A673 (cell line): ENCODE measurements at regions of chr7 and their contacts with region 1.

Region 1: GRCh38 chr7:379456-380138 is 89.6 kb downstream of the FOXL3 start:
- DNase-seq: no peak
- H3K4me3 ChIP-seq: no peak overlapping the region
- H3K27ac ChIP-seq: no peak overlapping the region
- H3K4me1 ChIP-seq: no peaks in the 10 kb centered on the region
- H3K27me3 ChIP-seq: no peaks in the 10 kb centered on the region
- CTCF ChIP-seq: no peak

Region 2: GRCh38 chr7:311796-312195 is 67.8 kb before region 1 on chr7:
- CTCF ChIA-PET with region 1: no interaction called
- POLR2A ChIA-PET with region 1: no interaction called
- intact Hi-C with region 1: no loop called
- DNase-seq: no peak
- H3K4me3 ChIP-seq: no peak overlapping the region
- H3K27ac ChIP-seq: no peak overlapping the region
- H3K4me1 ChIP-seq: no peaks in the 10 kb centered on the region
- H3K27me3 ChIP-seq: peaks cover 37% of the 10 kb centered on the region
- CTCF ChIP-seq: no peak

Region 3: DNA sequence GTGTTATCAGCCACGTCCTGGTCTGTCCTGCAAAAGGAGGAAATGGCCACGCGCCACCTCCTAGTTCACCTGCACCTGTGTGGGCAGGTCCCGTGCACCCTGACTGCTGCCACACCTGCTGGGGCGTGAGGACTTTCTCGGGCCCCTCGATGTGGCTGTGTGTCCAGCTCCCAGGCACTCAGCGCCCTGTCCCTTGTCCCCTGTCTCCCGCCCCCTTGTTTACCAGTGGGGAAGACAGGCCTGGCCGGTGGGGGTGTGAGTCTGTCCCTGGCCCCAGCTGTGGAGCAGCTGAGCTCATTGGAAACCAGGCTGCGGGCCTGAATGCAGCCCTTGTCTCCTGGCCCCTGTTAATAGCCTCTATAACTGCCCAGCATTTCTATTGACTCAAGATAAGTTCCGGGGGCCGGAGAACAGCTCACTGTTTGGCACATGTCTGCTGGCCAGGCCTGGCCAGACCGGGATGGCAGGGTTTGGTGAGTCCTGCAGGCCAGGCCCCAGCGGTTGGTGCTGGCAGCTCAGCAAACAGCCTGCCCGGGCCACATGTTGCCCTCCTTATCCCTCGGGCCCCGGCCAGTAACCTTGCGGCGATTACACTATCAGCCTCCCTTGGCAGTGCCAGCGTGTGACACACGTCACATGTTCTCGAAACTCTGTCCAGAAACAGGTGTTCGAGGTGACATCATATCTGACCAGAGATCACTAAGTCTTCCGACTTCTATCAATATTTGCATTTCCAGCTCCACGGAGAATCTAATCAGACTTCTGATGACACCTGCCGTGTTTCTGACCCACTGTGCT is 37.6 kb before region 1 on chr7:
- CTCF ChIA-PET with region 1: no interaction called
- POLR2A ChIA-PET with region 1: no interaction called
- intact Hi-C with region 1: no loop called
- DNase-seq: no peak
- H3K4me3 ChIP-seq: no peak overlapping the region
- H3K27ac ChIP-seq: no peak overlapping the region
- H3K4me1 ChIP-seq: no peaks in the 10 kb centered on the region
- H3K27me3 ChIP-seq: no peaks in the 10 kb centered on the region
- CTCF ChIP-seq: no peak

Region 4: DNA sequence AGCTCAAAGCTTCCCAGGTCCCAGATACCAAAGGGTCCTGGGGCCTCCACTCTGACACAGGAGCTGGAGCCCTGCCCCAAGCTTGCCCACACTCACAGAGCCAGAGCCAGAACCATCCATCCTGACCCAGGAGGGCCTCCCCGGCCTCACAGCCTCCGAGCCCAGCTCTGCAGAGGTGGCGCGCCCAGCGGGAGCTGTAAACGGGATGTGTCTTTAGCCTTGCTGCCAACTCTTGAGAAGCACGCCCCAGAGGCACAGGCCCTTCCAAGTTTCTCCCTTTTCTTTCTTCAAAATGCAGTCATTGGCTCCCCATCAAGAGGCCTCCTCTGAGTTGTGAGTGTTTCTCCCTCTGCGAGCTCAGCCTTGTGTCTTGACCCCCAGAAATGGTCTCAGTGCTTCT is 65.0 kb after region 1 on chr7:
- CTCF ChIA-PET with region 1: no interaction called
- POLR2A ChIA-PET with region 1: no interaction called
- intact Hi-C with region 1: loop called (anchors 10 kb)
- DNase-seq: no peak
- H3K4me3 ChIP-seq: no peak overlapping the region
- H3K27ac ChIP-seq: no peak overlapping the region
- H3K4me1 ChIP-seq: no peaks in the 10 kb centered on the region
- H3K27me3 ChIP-seq: no peaks in the 10 kb centered on the region
- CTCF ChIP-seq: no peak

Region 5: DNA sequence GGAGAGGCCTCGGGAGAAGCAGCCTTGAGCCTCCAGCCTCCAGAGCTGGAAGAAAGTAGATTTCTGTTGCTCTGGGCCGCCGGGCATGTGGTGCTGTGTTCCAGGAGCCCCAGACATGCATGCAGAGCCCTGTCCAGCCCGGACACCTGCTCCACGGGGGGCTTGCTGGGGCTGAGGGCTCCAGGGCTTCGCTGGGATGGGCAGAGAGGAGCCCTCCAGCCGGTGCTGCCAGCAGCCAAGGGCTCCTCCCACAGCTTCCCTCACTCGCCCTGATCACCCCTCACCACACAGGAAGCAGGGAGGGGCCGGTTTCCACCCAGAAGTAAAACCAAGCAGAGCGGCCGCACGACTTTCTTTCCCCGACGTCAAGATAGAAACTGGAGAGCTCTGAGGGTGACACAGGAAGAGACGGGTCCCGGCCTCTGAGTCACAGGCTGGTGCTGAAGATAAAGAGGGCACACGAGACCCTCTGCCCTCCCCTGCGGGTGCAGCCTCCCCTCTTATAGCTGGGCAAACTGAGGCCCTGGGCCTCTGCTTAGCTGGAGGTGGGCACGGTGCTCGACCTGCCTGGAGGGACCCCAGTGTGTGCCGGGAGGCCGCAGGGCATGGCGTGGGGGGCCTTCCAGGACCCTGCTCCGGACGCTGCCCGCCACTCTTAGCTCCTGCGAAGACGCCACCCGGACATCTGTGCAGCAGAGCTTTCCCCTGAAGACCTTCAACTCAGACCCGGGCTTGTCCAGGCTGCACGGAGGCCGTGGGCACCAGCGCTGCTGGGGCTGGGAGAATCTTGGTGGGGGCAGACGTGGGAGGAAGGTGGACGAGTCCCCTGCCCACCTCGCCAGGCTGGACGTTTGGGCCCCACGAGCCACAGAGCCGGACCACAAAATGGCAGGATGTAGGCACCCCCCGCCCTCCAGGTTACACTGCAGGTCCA is 543.8 kb after region 1 on chr7:
- CTCF ChIA-PET with region 1: no interaction called
- POLR2A ChIA-PET with region 1: no interaction called
- intact Hi-C with region 1: no loop called
- DNase-seq: peak; percentile 60
- H3K4me3 ChIP-seq: no peak overlapping the region
- H3K27ac ChIP-seq: peak overlapping the region; percentile 28
- H3K4me1 ChIP-seq: peaks cover 8% of the 10 kb centered on the region
- H3K27me3 ChIP-seq: no peaks in the 10 kb centered on the region
- CTCF ChIP-seq: no peak